Dorsolateral prefrontal cortex (tissue), 120 donors: ENCODE measurements at regions of chr12 and their contacts with region 1.

Region 1: DNA sequence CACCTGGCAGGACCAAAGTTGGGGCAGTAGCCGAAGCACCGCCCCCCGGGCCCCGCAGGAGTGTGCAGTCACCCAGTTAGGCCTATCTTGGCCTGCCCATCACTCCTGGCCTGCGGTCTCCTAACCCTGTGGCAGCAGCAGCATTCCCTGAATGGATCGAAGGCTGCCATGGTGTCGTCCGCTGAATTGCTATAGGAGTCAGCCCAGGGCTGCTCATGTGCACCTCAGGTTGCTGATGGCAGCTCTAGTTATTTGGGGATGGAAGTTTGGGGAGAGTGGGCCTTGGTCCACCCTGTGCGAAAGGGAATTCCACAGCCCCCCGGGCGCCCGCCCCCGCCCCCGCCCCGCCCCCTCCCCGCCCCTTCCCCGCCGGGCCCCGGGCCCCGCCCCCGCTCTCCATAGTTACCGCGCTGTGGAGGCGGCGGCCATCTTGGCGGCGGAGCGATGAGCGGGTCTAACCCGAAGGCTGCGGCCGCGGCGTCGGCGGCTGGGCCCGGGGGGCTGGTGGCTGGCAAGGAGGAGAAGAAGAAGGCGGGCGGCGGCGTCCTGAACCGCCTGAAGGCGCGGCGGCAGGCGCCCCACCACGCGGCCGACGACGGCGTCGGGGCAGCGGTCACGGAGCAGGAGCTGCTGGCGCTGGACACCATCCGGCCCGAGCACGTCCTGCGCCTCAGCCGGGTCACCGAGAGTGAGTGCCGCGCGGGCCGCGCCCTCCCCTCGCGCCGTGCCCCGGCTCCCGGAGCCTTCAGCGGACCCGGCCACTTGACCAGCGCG is at the start of gene UNC119B:
- DNase-seq: peak in 9 of 10 donors; percentile 40 to 82 (median 76)
- H3K4me3 ChIP-seq: peak within 1 kb of the TSS; percentile 69 to 97 (median 86)
- H3K27ac ChIP-seq: peak within 1 kb of the TSS; percentile 64 to 96 (median 91)
- H3K27me3 ChIP-seq: no peaks in the 10 kb centered on the region
- CTCF ChIP-seq: peak in 18 of 56 donors; percentile 6 to 44 (median 19)
- total RNA-seq, gene UNC119B: 19.6 to 43.0 (median 27.2) TPM

Region 2: GRCh38 chr12:120686690-120687577 is 23.3 kb before region 1 on chr12 and contains the start of gene MLEC:
- intact Hi-C with region 1: loop called (anchors 2 kb)
- DNase-seq: peak; percentile 96 to 99 (median 98)
- H3K4me3 ChIP-seq: peak within 1 kb of the TSS; percentile 70 to 100 (median 94)
- H3K27ac ChIP-seq: peak within 1 kb of the TSS; percentile 81 to 99 (median 96)
- H3K27me3 ChIP-seq: no peaks in the 10 kb centered on the region
- CTCF ChIP-seq: peak in 31 of 56 donors; percentile 8 to 58 (median 31)
- total RNA-seq, gene MLEC: 50.4 to 97.1 (median 73.3) TPM